GM18951 (cell line): ENCODE measurements at regions of chr6 and their contacts with region 1.

Region 1: DNA sequence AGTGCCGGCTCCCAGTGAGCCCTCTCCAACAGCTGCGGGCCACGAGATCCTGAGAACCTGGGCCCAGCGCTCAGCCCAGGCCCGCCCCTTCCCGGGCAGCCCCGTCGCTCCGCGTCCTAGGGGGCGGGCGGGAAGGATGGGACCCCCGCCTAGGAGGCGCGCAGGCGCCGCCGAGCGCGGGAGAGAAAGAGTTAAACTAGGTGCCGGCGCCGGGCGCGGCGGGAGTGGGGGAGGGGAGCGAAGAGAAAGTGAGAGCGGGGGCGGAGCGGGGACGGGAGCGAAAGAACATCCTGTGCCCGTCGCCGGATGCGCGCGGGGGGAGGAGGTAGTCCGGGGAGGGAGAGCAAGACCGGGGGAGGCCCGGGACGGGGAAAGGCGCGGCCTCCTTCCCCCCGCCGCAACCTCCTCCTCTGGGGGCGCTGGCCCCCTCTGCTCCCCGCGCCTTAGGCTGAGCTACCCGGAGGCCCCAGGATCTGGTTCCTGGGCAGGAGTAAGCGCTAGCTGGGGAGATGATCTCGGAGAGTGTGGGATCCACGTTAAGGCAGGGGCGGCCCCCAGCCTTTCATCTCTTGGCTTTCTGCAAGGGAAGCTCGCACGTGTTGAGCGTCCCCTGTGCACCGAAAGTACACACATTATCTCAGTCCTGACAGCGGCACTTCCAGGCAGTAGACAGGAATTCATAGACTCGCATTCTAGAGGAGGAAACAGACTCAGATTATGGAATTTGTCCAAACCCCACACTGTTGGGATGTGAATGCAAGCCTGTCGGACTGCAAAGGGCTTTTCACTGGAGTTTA is 4.9 kb upstream of the ARMC12 start:
- POLR2A ChIP-seq: peak; percentile 55

Region 2: DNA sequence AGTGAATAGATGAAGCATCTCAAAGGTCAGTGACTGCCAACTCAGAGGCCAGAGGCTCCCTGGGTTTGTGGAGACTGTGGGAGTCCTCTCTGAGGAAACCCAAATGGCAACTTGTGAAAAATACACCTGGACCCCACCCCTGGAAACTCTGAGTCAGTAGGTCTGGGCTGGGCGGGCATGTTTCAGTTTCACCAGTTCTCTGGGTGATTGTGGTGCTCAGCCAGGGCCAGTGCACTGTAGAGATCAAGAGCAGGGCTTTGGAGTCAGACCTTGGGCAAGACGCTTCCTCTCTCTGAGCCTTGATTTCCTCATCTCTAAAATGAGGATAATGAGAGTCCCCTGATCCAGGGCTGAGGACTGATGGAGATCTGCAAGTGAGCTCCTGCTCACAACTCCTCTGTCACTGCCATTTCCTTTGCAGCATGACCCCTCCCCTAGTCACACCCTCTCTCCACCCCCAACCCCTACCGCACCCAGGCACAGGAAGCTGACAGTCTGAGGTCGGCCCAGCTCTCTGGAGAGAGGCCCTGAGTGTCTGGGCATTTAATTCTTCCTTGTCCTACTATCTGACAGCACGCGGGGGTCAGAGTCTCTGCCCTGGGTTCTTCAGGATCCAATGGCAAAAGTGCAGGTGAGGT is 429.2 kb before region 1 on chr6:
- in situ Hi-C with region 1: loop called (anchors 25 kb)
- POLR2A ChIP-seq: peak; percentile 70

Region 3: DNA sequence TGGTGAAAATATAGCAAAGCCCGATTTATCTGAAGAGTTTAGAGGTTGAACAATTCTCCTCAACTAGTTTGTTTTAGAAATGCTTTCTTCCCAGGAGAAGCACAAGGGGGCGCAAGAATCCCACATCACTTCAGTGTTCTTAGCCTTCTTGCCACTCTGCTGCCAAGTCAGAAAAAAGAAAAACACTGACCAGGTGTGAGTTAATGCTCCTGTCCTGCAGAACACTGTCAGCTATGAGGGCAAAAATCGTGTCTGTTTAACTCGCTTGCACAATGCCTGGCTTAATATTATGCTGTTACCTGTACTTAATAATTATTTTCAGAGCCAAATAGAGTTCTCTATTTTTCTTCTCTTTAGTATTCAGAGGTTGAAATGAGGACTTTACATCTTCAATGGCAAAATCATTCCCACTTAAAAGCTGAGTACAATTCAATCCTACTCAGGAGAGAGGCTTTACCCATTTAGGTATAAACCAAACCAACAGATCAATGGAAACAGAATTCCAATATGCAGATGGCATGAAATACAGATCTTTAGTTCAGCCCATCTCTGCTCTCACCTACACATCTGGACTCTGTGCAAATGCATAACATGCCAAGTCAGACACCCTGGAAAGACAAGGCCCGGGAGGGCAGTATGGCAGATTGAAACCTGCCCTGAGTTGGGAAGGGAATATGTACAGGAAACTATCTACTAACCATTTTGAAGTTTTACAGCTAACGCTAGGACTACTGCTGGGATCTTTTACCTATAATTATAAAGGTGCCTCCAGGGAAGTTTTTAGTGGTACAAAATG is 147.8 kb before region 1 on chr6:
- in situ Hi-C with region 1: loop called (anchors 5 kb)
- POLR2A ChIP-seq: no peak

Region 4: GRCh38 chr6:35893246-35893645 is 161.3 kb after region 1 on chr6:
- in situ Hi-C with region 1: no loop called
- POLR2A ChIP-seq: no peak